Activated CD4-positive, alpha-beta memory T cell treated with anti-CD3 and anti-CD28 coated beads, Interleukin-2, amount 10 ng/mL, durations not matched to agents 7 days and 5 days (primary cell): ENCODE measurements at regions of chr20 and their contacts with region 1.

Region 1: DNA sequence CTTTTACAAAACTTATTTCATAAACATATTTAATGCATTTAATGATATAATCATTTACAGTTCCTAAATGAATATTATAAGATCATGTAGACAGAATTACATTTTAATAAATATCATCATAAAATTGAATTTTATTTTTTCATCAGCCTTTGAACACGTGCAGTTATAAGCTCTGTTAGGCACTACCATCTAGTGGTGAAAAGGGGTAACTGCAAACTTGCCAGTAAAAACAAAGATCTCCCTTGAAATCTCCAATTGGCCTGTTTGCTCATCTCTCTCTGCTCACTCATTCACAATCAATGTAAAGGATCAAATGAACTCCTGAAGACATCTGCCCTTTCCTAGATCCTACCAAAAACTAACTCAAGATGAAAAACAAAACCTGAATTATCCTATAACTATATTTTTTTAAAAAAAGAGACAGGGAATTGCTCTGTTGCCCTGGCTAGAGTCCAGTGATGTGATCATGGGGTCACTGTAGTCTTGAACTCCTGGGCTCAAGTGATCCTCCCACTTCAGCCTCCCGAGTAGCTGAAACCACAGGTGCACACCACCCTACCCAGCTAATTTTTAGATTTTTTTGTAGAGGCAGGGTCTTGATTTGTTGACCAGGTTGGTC is 31.7 kb downstream of the SAMHD1 start:
- DNase-seq: no peak
- H3K4me3 Mint-ChIP-seq: no peak overlapping the region
- H3K27ac Mint-ChIP-seq: no peak overlapping the region
- H3K4me1 Mint-ChIP-seq: peaks cover 6% of the 10 kb centered on the region
- H3K27me3 Mint-ChIP-seq: no peaks in the 10 kb centered on the region

Region 2: DNA sequence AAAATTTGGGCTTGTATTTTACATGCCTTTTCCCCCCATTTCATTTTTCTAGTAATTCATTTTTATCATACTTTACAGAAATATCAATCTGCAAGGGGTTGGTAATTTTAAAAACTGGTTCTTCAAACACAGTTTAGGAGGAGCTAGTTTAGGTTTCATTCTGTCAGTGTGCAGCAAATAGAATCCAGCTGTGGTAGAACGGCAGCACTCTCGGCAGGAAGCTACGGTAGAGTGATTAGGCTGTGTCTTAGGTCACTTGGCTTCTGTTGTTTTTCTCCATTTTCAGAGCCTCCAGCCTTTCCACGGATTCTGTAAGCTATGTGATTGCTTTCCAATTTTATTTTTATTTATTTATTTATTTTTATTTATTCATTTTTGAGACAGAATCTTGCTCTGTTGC is 11.2 kb before region 1 on chr20:
- CTCF ChIA-PET with region 1: interaction called, 13 read pairs
- POLR2A ChIA-PET with region 1: interaction called, 4 read pairs
- DNase-seq: no peak
- H3K4me3 Mint-ChIP-seq: no peak overlapping the region
- H3K27ac Mint-ChIP-seq: no peak overlapping the region
- H3K4me1 Mint-ChIP-seq: peaks cover 14% of the 10 kb centered on the region
- H3K27me3 Mint-ChIP-seq: no peaks in the 10 kb centered on the region

Region 3: GRCh38 chr20:36932476-36933426 is 12.9 kb after region 1 on chr20:
- CTCF ChIA-PET with region 1: interaction called, 11 read pairs
- POLR2A ChIA-PET with region 1: interaction called, 10 read pairs
- DNase-seq: no peak
- H3K4me3 Mint-ChIP-seq: no peak overlapping the region
- H3K27ac Mint-ChIP-seq: peak overlapping the region; percentile 64
- H3K4me1 Mint-ChIP-seq: peaks cover 57% of the 10 kb centered on the region
- H3K27me3 Mint-ChIP-seq: no peaks in the 10 kb centered on the region

Region 4: GRCh38 chr20:37111926-37112455 is 192.2 kb after region 1 on chr20:
- CTCF ChIA-PET with region 1: no interaction called
- POLR2A ChIA-PET with region 1: no interaction called
- DNase-seq: no peak
- H3K4me3 Mint-ChIP-seq: no peak overlapping the region
- H3K27ac Mint-ChIP-seq: no peak overlapping the region
- H3K4me1 Mint-ChIP-seq: no peaks in the 10 kb centered on the region
- H3K27me3 Mint-ChIP-seq: peaks cover 8% of the 10 kb centered on the region